OCI-LY7 (cell line): ENCODE measurements at regions of chr6 and their contacts with region 1.

Region 1: GRCh38 chr6:73262671-73263569 is at the start of gene KHDC1:
- DNase-seq: peak; percentile 86
- H3K4me3 ChIP-seq: peak within 1 kb of the TSS; percentile 87
- H3K27ac ChIP-seq: peak within 1 kb of the TSS; percentile 59
- H3K4me1 ChIP-seq: peaks cover 23% of the 10 kb centered on the region
- CTCF ChIP-seq: 0 out of 2 replicates have a peak, but pooled peaks have one; percentile 4
- total RNA-seq, gene KHDC1: 13.4 and 16.2 TPM in 2 replicates

Region 2: DNA sequence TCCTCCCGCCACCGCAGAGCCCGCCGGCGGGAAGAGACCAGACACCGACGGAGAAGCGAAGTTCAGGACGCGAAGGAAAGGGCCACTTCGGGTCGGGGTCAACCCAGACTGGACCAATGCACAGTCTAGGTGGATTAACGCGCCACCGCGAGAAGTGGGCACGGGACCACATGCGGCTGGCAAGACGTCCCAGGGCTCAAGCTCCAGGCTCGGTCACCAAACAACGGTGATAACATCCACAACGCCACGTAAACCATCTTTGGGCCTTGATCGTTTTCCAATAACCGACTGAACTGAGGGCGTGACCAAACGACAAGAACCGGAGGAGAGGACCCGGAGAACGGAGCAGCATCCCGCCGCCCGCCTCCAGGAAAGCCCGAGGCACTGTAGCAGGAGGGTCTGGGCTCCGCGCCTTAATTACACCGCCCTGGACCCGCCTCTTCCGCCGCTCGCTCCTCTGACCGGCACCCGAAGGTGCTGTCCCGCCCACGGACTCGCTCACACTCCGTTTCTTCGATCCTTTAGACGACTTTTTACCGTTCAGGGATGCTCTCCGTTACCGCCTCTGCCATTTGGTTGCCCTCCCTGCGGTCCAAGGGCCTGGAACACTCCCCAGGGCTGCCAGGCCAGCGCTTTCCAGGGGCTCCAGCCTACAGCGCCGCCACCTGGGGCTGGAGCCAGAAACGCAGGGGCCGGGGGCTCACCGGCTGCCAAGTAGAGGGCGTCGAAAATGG is 47.0 kb after region 1 on chr6:
- CTCF ChIA-PET with region 1: no interaction called
- POLR2A ChIA-PET with region 1: interaction called, 7 read pairs
- intact Hi-C with region 1: loop called (anchors 1 kb)
- DNase-seq: peak; percentile 81
- H3K4me3 ChIP-seq: peak overlapping the region; percentile 75
- H3K27ac ChIP-seq: peak overlapping the region; percentile 65
- H3K4me1 ChIP-seq: peaks cover 24% of the 10 kb centered on the region
- CTCF ChIP-seq: peak; percentile 89

Region 3: GRCh38 chr6:73451223-73452107 is 188.5 kb after region 1 on chr6:
- CTCF ChIA-PET with region 1: no interaction called
- POLR2A ChIA-PET with region 1: no interaction called
- intact Hi-C with region 1: no loop called
- DNase-seq: peak; percentile 29
- H3K4me3 ChIP-seq: peak overlapping the region; percentile 34
- H3K27ac ChIP-seq: no peak overlapping the region
- H3K4me1 ChIP-seq: peaks cover 15% of the 10 kb centered on the region
- CTCF ChIP-seq: no peak